ENCODE measurements at regions of chr1 and their contacts with region 1.

Region 1: DNA sequence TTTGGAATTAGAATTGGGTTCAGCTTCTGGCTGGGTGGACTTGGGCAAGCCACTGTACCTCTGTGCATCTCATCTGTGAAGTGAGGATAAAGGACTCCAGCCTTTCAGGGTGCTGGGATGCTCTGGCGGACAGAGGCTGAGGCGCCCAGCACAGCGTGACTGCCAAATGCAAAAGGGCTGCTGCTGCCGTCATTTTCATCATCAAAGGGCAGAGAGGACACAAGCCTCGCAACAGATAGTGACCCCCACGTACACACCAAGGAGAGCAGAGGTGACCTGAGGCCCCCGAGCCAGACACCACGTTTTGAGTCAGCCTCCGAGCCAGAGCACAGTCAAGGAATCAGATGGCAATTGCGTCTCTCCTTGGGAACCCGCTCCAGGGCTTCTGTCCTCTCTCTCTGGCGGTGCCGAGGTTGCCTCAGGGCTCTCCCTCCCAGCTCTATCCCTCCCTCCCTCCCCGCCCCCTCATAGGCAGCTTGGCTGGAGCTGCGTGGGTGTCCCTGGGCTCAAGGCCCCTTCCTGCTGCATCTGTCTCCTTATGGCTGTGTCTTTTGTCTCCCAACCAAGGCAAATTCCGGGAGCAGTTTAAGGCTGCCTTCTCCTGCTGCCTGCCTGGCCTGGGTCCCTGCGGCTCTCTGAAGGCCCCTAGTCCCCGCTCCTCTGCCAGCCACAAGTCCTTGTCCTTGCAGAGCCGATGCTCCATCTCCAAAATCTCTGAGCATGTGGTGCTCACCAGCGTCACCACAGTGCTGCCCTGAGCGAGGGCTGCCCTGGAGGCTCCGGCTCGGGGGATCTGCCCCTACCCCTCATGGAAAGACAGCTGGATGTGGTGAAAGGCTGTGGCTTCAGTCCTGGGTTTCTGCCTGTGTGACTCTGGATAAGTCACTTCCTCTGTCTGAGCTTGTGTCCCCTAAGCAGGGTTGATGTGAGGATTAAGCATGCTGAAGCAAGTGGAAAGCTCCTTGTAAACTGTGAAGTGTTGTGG is 9.0 kb downstream of the HCRTR1 start:
- DNase-seq: no peak

Region 2: DNA sequence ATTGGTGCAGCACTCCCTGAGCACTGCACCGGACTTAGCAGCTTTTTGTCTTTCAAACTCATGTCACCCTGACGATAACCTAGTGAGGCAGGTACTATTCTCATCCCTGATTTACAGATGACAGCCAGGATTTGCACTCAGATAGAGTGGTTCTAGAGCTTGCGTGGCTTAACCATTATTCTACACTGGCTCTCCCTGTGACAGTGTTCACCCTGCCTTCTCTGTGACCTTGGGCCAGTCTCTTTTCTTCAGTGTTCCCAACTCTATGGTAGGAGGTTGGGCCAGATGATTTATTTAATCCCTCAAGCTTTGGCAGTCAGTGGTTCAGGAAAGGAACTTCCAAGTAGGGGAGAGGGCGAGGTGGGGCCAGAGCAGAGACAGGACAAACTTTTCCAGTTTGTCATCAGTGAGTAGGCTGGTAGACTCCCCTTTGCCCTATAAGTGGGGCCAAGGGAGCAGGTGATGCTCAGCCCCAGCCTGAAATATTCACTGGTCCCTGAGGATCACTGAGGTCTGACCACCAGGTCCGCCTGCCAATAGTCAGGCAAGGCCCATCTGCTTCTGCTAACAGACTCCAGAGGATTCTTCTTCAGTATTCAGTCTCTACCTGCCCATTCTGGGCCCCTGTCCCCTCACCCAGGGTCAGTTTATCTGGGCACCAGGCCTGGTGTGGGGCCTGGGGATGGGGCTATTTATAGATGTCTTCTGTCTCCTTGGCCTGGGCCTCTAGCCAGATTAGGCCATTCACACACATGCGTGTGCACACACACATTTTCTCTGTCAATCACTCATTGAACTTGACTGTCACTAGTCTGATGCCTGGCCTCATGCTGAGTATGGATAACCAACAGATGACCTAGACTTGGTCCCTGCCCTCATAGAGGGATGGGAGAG is 244.9 kb before region 1 on chr1:
- intact Hi-C with region 1: loop called (anchors 5 kb)
- DNase-seq: no peak

Region 3: DNA sequence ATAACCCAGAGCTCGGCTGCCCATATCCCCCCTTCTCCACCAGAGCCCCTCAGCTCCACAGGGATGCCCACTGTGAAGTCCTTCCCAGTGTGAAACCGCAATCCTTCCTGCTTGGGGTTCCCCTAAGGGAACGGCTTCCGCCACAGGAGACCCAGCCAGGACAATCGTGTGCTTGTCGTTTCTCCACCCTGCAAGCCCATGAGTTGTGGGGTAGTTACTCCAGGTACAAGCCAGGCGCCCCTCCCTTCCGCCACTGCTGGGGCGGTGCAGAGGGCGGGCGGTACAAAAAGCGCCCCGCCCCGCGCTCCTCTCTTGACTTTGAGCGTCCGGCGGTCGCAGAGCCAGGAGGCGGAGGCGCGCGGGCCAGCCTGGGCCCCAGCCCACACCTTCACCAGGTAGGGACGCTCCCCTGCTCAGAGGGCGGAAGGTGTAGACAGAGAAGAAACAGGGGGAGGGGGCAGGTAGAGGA is 50.3 kb before region 1 on chr1 and contains the start of gene TINAGL1:
- intact Hi-C with region 1: loop called (anchors 2 kb)
- DNase-seq: peak; percentile 87
- total RNA-seq, gene TINAGL1: 180 TPM

Region 4: DNA sequence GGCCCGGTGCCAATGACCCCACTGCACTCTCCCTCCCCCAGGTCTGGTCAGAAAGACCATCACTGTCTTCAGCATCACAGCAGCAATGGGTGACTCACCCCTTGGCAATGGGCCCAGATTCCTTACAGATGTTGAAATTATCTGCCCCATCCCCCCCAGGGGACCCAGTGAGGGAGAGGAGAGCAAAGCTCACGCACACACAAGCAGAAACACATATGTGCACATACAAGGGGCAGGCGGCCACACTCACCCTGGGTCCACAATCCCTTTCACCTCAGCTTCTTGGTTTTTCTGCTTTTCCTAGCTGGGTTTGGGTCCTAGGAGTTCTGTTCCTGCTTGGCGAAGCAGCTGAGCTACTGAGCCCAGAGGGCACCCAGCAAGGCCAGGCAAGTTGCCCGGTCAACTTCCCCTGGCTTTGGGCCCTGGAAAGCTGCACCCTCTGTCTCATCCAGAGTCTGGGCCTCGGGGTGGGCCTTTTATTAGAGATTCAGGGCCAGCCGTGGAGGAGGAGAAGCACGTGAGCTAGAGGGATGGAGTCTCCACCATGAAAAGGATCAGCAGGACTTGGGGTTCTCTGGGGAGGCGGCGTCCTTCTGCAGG is 74.7 kb after region 1 on chr1:
- intact Hi-C with region 1: no loop called
- DNase-seq: peak; percentile 89